Left cardiac atrium (tissue), 4 donors: ENCODE measurements at regions of chr5 and their contacts with region 1.

Region 1: DNA sequence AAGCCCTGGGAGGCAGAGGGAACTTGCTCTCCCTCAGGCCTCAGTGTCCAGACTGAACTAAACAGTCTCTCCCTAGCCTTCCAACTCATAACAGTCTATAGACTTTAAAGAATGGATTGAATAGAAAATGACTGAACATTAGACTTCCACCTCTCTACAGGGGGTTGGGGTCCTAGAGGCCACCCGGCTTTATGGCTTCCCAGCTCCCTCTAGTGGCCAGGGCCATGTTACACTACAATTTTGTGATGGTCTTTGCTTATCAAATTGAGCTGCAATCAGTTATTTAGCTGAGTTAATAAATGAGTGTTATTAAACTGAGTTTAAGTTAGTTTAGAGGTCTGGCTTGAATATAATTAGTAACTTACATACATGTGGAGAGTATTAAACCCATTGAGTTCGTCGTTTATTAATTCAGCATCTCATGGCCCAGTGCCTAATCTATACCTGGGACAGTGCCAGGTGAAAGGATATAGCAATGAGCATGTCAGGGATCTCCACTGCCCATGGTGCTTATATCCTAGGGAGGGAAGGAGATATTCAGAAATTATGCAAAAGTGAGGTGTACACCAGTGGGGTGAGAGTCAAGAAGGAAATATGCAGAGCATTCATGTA is 105.2 kb downstream of the SH3TC2 start:
- DNase-seq: no peak
- ATAC-seq: peak; percentile 28 to 61

Region 2: DNA sequence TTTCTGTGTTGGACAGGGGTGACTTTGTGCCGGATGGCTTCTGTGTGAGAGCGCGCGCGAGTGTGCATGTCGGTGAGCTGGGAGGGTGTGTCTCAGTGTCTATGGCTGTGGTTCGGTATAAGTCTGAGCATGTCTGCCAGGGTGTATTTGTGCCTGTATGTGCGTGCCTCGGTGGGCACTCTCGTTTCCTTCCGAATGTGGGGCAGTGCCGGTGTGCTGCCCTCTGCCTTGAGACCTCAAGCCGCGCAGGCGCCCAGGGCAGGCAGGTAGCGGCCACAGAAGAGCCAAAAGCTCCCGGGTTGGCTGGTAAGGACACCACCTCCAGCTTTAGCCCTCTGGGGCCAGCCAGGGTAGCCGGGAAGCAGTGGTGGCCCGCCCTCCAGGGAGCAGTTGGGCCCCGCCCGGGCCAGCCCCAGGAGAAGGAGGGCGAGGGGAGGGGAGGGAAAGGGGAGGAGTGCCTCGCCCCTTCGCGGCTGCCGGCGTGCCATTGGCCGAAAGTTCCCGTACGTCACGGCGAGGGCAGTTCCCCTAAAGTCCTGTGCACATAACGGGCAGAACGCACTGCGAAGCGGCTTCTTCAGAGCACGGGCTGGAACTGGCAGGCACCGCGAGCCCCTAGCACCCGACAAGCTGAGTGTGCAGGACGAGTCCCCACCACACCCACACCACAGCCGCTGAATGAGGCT is 131.5 kb before region 1 on chr5 and contains the start of gene ADRB2:
- intact Hi-C with region 1: loop called (anchors 5 kb)
- DNase-seq: peak; percentile 96
- ATAC-seq: peak; percentile 96 to 99
- total RNA-seq, gene ADRB2: 3.3 to 5.8 TPM

Region 3: GRCh38 chr5:148933903-148934432 is 23.7 kb before region 1 on chr5:
- intact Hi-C with region 1: loop called in 1 of 2 experiments (anchors 2 kb)
- DNase-seq: no peak
- ATAC-seq: peak in 1 of 2 donors; percentile 3

Region 4: GRCh38 chr5:149079883-149080282 is 122.2 kb after region 1 on chr5:
- intact Hi-C with region 1: no loop called
- DNase-seq: no peak
- ATAC-seq: no peak

Region 5: DNA sequence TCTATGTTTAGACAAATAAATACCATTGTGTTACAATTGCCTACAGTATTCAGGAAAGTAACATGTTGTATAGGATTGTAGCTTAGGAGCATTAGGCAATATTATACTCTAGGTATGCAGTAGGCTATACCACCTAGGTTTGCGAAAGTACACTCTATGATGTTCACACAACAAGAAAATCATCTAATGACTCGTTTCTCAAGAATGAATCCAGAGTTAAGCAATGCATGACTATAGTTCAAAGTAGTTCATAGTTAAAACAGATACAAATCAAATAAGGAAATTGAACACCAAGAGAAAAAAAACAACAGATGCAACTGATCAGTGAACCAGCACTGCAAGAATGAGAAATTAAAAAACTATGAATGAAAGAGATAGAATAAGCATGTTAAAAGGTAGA is 156.0 kb after region 1 on chr5:
- intact Hi-C with region 1: no loop called
- DNase-seq: no peak
- ATAC-seq: peak in 1 of 2 donors; percentile 62